HepG2 (cell line): ENCODE measurements at regions of chr2 and their contacts with region 1.

Region 1: DNA sequence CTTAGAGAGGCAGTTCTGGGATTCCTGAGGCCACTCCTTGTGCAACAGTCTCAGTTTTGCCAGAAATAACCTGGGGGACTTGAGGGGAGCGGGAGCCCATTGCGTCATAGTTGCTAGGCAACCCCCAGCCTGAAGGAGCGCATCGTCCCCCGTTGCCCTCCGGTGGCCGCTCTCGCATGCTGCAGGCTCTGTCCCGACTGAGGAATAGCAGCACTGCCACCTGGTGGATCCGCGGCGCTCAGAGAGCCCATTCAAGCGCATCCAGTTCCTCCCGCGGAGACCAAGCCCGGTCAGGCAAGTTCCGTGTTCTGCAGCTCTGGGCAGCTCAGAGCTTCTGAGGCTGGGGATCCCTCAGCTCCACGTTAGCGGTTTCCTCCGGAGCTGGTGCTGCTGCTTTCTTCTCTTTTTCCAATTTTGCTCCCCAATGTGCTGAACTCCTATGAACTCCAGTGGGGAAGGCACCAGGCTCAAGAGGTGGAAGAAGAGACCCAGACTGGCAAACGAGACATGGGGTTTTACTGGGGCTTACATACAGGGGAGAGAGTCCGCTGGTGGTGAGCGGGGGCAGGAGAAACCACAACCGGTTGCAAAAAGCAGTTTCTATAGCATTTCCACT is 15.1 kb downstream of the SLC4A3 start:
- DNase-seq: peak; percentile 93
- ATAC-seq: peak; percentile 92
- H3K4me3 ChIP-seq: peak overlapping the region in 1 of 3 experiments; percentile 36; a peak in 1 of 6 replicates
- H3K27ac ChIP-seq: no peak overlapping the region
- H3K4me1 ChIP-seq: peaks cover 29% of the 10 kb centered on the region
- H3K27me3 ChIP-seq: peaks cover 18 to 77% of the 10 kb centered on the region in 2 experiments
- CTCF ChIP-seq: peak; percentile 100
- EP300 ChIP-seq: peak in 1 of 2 experiments; percentile 37; a peak in 1 of 4 replicates
- POLR2A ChIP-seq: no peak
- RAD21 ChIP-seq: peak; percentile 100

Region 2: DNA sequence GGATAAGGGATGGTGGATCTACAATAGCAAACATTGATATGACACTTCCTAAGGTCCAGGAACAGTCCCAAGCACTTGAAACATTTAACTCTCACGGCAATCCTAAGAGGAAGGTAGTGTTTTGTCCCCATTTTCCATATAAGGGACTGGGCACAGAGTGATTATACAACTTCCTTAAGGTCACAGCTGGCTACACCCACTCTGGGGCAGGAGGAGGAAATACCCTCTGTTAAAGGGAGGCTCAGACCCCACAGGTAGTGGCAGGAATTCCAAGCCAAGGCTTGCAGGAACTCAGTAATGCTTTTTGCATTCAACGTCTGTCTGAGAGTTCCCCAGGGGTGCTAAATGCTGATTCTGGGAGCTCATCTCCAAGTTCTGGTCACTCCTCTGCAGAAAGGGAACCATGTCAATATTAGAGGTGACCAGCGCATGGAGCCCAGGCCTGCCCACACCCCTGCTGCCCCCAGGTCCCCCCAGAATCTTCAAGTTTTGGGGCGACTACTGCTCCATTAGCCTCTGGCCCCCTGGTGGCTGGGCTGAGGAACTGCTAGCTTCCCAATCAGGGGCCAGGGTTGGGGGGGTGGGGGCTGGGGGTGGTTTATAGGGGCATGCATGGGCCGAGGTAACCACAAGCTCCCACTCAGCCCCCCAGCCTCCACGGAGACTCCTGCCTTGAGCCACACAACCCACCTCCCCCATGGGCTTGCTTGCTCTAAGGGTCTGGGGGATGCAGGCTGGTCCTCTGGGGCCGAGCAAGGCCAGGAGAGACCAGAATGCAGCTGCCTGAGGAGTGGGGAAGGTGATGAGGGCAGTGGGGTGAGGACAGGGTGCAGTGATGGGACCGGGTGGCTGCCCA is 82.3 kb before region 1 on chr2:
- CTCF ChIA-PET with region 1: interaction called, 19 read pairs
- POLR2A ChIA-PET with region 1: no interaction called
- in situ Hi-C with region 1: no loop called
- intact Hi-C with region 1: loop called (anchors 1 kb)
- DNase-seq: no peak
- ATAC-seq: peak; percentile 18
- H3K4me3 ChIP-seq: no peak overlapping the region
- H3K27ac ChIP-seq: no peak overlapping the region
- H3K4me1 ChIP-seq: peaks cover 35% of the 10 kb centered on the region
- H3K27me3 ChIP-seq: no peaks in the 10 kb centered on the region
- CTCF ChIP-seq: peak; percentile 62
- EP300 ChIP-seq: no peak
- POLR2A ChIP-seq: no peak
- RAD21 ChIP-seq: no peak

Region 3: GRCh38 chr2:219571311-219572236 is 71.0 kb before region 1 on chr2 and contains the start of gene OBSL1:
- CTCF ChIA-PET with region 1: interaction called, 13 read pairs
- POLR2A ChIA-PET with region 1: interaction called, 4 read pairs
- in situ Hi-C with region 1: no loop called
- intact Hi-C with region 1: no loop called
- DNase-seq: peak; percentile 90
- ATAC-seq: peak; percentile 85
- H3K4me3 ChIP-seq: peak within 1 kb of the TSS; percentile 90 to 95 (median 94)
- H3K27ac ChIP-seq: peak within 1 kb of the TSS; percentile 94
- H3K4me1 ChIP-seq: peaks cover 66% of the 10 kb centered on the region
- H3K27me3 ChIP-seq: no peaks in the 10 kb centered on the region
- CTCF ChIP-seq: peak; percentile 30; the same call in 1 of the 2 replicates
- EP300 ChIP-seq: peak; percentile 17 to 69; a peak in 3 of 4 replicates
- POLR2A ChIP-seq: peak in 1 of 2 experiments; percentile 63; a peak in 1 of 4 replicates
- RAD21 ChIP-seq: no peak; the same call in 1 of the 2 replicates
- total RNA-seq, gene OBSL1: 65.4 and 86.7 TPM in 2 replicates

Region 4: GRCh38 chr2:219619235-219619634 is 23.3 kb before region 1 on chr2:
- CTCF ChIA-PET with region 1: interaction called, 12 read pairs
- POLR2A ChIA-PET with region 1: no interaction called
- in situ Hi-C with region 1: no loop called
- intact Hi-C with region 1: loop called (anchors 1 kb)
- DNase-seq: no peak
- ATAC-seq: 0 out of 3 replicates have a peak, but pooled peaks have one; percentile 18
- H3K4me3 ChIP-seq: no peak overlapping the region
- H3K27ac ChIP-seq: no peak overlapping the region
- H3K4me1 ChIP-seq: peaks cover 10% of the 10 kb centered on the region
- H3K27me3 ChIP-seq: peaks cover 2 to 29% of the 10 kb centered on the region in 2 experiments; a peak in 4 of 5 replicates
- CTCF ChIP-seq: peak; percentile 50
- EP300 ChIP-seq: no peak
- POLR2A ChIP-seq: no peak
- RAD21 ChIP-seq: no peak

Region 5: GRCh38 chr2:219689676-219690628 is 47.4 kb after region 1 on chr2:
- CTCF ChIA-PET with region 1: interaction called, 4 read pairs
- POLR2A ChIA-PET with region 1: no interaction called
- in situ Hi-C with region 1: no loop called
- intact Hi-C with region 1: loop called (anchors 2 kb)
- DNase-seq: peak; percentile 51
- ATAC-seq: 0 out of 3 replicates have a peak, but pooled peaks have one; percentile 14
- H3K4me3 ChIP-seq: no peak overlapping the region
- H3K27ac ChIP-seq: no peak overlapping the region
- H3K4me1 ChIP-seq: peaks cover 34% of the 10 kb centered on the region
- H3K27me3 ChIP-seq: peaks cover 0 to 41% of the 10 kb centered on the region in 2 experiments; a peak in 3 of 5 replicates
- CTCF ChIP-seq: peak; percentile 81
- EP300 ChIP-seq: no peak
- POLR2A ChIP-seq: no peak
- RAD21 ChIP-seq: 0 out of 2 replicates have a peak, but pooled peaks have one; percentile 29

Region 6: GRCh38 chr2:219722349-219722776 is 79.8 kb after region 1 on chr2:
- CTCF ChIA-PET with region 1: no interaction called
- POLR2A ChIA-PET with region 1: no interaction called
- in situ Hi-C with region 1: no loop called
- intact Hi-C with region 1: no loop called
- DNase-seq: peak; percentile 60
- ATAC-seq: peak; percentile 69
- H3K4me3 ChIP-seq: no peak overlapping the region
- H3K27ac ChIP-seq: no peak overlapping the region
- H3K4me1 ChIP-seq: peaks cover 8% of the 10 kb centered on the region
- H3K27me3 ChIP-seq: peaks cover 0 to 9% of the 10 kb centered on the region in 2 experiments; a peak in 2 of 5 replicates
- CTCF ChIP-seq: no peak
- EP300 ChIP-seq: no peak
- POLR2A ChIP-seq: no peak
- RAD21 ChIP-seq: no peak

Region 7: GRCh38 chr2:219783359-219783975 is 140.9 kb after region 1 on chr2:
- CTCF ChIA-PET with region 1: no interaction called
- POLR2A ChIA-PET with region 1: no interaction called
- in situ Hi-C with region 1: no loop called
- intact Hi-C with region 1: no loop called
- DNase-seq: no peak
- ATAC-seq: no peak
- H3K4me3 ChIP-seq: no peak overlapping the region
- H3K27ac ChIP-seq: no peak overlapping the region
- H3K4me1 ChIP-seq: no peaks in the 10 kb centered on the region
- H3K27me3 ChIP-seq: peaks cover 0 to under 1% of the 10 kb centered on the region in 2 experiments; a peak in 2 of 5 replicates
- CTCF ChIP-seq: no peak
- EP300 ChIP-seq: no peak
- POLR2A ChIP-seq: no peak
- RAD21 ChIP-seq: no peak